ENCODE measurements at regions of chr15 and their contacts with region 1.

Region 1: DNA sequence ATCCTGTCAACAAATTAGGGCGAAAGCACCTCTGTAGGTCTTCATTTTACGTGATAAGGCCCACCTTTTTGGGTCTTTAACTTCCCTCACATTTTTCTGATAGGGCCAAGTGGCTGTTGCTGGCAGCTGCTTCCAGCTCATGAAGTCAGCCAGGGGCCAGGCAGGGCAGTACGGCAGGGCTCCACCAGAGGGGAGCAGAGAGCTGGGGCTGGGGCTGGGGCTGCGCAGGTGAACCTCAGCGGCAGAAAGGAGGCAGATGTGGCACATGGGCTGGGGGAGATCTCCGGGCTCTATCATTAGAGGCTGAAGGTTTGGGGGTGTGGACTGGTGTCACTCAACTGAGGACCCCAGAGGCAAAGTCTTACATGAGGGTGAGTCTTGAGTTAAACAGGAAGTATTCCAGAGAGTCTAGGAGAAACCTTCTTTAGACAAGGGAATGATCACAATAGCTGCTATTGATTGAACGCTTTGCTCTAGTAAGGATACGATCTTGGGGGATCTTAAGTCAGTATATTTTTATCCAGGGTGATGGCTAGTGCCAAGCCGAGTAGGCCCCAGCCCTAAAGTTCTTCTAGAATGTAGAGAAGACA is 62.8 kb upstream of the MEX3B start:
- DNase-seq: no peak
- H3K4me3 ChIP-seq: no peak overlapping the region
- H3K27me3 ChIP-seq: no peaks in the 10 kb centered on the region
- CTCF ChIP-seq: peak; percentile 97

Region 2: GRCh38 chr15:81863162-81863561 is 245.4 kb before region 1 on chr15:
- CTCF ChIA-PET with region 1: no interaction called
- POLR2A ChIA-PET with region 1: no interaction called
- DNase-seq: no peak
- H3K4me3 ChIP-seq: no peak overlapping the region
- H3K27me3 ChIP-seq: no peaks in the 10 kb centered on the region
- CTCF ChIP-seq: no peak

Region 3: DNA sequence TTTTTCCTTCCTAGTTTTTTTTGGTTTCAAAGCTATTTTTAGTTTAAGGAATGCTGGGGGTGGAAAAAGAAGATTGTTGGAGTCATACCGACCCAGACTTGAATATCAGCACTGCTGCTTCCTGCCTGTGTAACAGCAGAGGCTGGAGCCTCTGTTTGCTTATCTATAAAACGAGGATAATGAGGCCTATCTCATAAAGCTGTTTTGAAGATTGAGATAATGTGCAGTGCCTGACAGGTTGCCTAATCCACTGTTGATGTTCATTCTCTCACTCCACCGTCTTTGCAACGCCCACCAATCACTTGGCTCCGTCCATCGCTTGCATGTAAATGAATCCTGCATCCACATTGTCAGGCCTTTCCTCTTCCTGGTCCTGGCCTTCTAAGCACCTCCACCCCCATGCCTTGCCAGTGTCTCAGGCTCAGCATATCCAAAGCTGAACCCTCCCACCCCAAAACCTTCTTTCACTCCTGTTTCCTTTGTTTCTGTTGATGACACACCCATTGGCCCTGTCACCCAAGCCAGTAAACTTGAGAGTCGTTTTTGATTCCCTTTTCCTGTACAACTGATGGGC is 157.7 kb before region 1 on chr15:
- CTCF ChIA-PET with region 1: no interaction called
- POLR2A ChIA-PET with region 1: no interaction called
- DNase-seq: no peak
- H3K4me3 ChIP-seq: no peak overlapping the region
- H3K27me3 ChIP-seq: no peaks in the 10 kb centered on the region
- CTCF ChIP-seq: no peak

Region 4: GRCh38 chr15:82122746-82123400 is 14.3 kb after region 1 on chr15:
- CTCF ChIA-PET with region 1: interaction called, 52 read pairs
- POLR2A ChIA-PET with region 1: no interaction called
- DNase-seq: peak; percentile 95
- H3K4me3 ChIP-seq: no peak overlapping the region
- H3K27me3 ChIP-seq: no peaks in the 10 kb centered on the region
- CTCF ChIP-seq: no peak

Region 5: DNA sequence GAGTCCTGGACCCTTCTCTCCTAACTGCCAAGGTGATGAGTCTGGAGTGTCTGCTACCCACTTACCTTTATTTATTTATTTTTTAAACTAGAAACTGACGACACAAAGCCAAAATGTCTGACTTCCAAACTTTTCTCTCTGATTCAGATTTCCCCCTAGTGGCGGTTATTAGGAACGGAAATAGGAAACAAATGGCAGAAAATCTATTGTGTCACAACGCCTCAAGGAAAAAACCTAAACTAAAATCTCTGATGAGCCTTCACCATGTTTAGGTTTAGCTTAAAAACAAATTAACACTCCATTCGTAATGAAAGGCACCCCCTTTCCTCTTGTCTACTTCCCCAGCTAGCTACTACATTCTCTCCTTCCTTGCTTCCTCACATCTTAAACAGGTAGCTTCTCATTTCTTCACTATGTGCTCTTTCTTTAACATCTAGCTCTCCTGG is 31.3 kb after region 1 on chr15:
- CTCF ChIA-PET with region 1: interaction called, 27 read pairs
- POLR2A ChIA-PET with region 1: no interaction called
- DNase-seq: no peak
- H3K4me3 ChIP-seq: no peak overlapping the region
- H3K27me3 ChIP-seq: no peaks in the 10 kb centered on the region
- CTCF ChIP-seq: peak; percentile 75

Region 6: GRCh38 chr15:82197733-82198594 is 89.4 kb after region 1 on chr15:
- CTCF ChIA-PET with region 1: interaction called, 25 read pairs
- POLR2A ChIA-PET with region 1: no interaction called
- DNase-seq: no peak
- H3K4me3 ChIP-seq: no peak overlapping the region
- H3K27me3 ChIP-seq: no peaks in the 10 kb centered on the region
- CTCF ChIP-seq: peak; percentile 78